ENCODE measurements at regions of chr11 and their contacts with region 1.

Region 1: DNA sequence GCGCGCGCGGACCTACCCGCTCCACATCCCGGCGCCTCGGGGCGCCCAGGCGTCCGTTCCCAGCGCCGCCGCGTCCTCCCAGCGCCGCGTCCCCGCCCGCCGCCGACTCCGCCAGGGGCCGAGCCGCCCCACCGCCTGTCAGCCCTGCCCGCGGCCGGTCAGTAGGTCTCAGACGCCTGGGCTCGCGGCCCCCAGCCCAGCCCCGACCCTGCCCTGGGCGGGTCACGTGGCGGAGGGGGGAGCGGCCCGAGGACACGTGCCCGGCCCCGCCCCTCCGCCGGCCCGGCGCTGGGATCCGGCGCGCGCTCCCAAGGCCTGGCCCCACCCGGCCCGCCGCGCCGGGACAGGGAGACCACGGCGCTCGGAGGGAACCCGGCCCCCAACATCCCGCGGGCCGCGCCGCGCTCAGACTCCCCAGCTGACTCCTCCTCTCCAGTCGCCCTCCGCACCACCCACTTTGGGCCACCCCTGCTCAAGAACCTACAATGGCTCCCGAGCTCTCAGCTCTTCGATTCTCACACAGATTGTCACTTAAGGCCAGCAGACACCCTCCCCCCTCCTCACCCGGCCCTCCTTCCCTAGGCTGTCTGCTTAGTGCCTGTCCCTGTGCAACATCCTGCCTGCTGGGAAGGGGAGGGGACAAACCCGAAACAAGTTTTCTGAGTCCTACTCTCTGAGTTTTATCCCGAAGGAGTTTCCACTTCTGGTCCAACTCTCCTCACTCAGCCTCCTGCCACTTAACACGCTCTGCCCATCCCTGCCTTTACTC is at the start of gene RAB3IL1:
- DNase-seq: no peak
- H3K4me3 ChIP-seq: peak within 1 kb of the TSS; percentile 38 to 57 (median 52)
- H3K27ac ChIP-seq: no peak within 1 kb of the TSS
- H3K4me1 ChIP-seq: no peaks in the 10 kb centered on the region
- H3K27me3 ChIP-seq: peaks cover 48% of the 10 kb centered on the region
- CTCF ChIP-seq: no peak
- polyA plus RNA-seq, gene RAB3IL1: 0.31 to 0.66 TPM (median 0.32 TPM) in 3 replicates

Region 2: DNA sequence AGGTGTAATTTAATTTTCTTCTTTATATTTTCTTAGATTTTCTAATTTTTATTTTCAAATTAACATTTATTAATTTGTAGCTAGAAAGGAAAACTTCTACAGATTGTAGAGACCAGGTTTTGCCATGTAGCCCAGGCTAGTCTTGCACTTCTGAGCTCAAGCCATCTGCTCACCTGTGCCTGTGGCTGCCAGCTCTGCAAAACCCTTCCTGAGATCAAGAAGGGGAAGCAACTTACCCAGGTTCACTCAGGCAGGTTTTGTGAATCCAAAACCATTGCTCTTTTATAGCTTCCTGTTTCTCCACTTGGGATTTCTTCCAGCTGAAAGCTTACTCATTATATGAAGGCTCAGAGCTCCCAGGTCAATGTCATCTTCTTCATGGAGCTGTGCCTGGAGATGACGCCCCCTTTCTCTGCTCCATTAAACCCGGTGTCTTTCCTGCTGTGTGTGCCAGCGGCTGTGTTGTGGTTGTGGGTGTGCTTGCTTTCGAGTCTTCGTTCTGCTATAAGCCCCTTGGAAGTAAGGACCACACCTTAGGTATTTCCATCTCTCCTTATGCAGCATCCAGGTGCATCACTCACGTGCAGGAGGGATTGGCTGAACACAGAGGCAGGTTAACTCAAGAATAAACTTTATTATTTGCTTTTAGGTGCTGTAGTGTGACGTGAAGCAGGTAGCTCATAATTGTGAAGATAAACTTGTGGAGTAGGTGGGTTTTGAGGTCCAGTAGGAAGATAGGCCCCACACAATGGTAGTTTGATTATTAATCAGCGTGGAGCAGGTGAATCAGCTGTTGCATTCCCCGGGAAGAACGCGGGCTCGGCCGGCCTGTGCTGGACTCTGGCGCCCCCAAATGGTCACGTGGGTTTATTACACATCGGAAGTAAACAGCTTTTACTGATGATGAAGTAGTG is 164.1 kb after region 1 on chr11:
- dilution Hi-C with region 1: loop called (anchors 25 kb)
- DNase-seq: peak; percentile 15
- H3K4me3 ChIP-seq: no peak overlapping the region
- H3K27ac ChIP-seq: no peak overlapping the region
- H3K4me1 ChIP-seq: no peaks in the 10 kb centered on the region
- H3K27me3 ChIP-seq: no peaks in the 10 kb centered on the region
- CTCF ChIP-seq: peak; percentile 79 to 96 (median 94)